ENCODE measurements at regions of chr14 and their contacts with region 1.

Region 1: DNA sequence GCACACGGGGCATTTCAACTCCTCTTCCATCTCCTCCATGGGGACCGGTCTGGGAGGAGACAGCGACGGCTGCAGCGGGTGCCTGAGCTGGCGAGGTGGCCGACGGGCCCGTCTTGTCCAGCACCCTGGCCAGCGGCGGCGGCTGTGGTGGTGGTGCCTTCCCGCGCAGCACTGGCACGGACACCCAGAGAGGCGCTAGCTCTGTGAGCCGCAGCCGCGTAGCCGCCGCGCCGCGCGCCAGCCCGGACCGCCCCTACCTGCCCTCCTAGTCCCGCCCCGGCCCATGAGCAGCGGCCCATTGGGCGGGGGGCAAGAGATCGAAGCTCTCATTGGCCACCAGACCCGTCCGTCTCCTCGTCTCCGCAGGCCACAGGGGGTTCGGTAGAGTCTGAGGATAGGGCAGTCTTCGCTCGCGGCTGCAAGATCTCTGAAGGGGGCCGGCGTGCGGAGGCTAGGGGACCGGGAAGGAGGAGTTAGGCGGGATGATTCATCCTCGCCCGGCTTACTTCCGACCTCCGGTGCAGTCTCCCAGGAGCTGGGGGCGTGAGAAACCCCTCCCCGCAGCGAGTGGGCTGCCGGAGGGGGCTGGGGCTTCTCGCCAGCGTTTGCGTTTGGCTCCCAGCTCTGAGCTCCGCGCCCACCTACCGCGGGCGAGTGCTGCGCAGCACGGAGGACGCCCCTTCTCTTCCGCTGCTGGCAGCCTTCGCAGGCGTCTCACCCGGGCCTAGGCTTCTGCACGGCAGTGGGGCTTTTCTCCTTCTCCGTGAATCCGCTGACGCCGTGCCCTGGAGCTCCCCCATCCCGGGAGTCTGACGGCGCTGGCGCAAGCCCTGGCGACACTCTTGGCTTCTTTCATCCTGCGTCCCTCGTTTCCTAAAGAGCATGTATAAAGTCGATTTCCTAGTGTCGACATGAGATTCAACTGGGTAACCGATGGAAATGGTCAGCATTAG is at the start of gene TRIM9:
- DNase-seq: peak; percentile 95 to 99 (median 96)
- H3K4me3 ChIP-seq: peak within 1 kb of the TSS; percentile 71
- H3K27ac ChIP-seq: peak within 1 kb of the TSS in 1 of 2 donors; percentile 55
- H3K4me1 ChIP-seq: peaks cover 7% of the 10 kb centered on the region
- H3K27me3 ChIP-seq: no peaks in the 10 kb centered on the region
- CTCF ChIP-seq: peak in 1 of 3 donors; percentile 10
- EP300 ChIP-seq: no peak
- POLR2A ChIP-seq: peak; percentile 26
- total RNA-seq, gene TRIM9: 0.36 to 8.7 (median 1.7) TPM

Region 2: GRCh38 chr14:50736932-50737419 is 358.2 kb before region 1 on chr14:
- intact Hi-C with region 1: no loop called
- DNase-seq: no peak
- H3K4me3 ChIP-seq: no peak overlapping the region
- H3K27ac ChIP-seq: no peak overlapping the region
- H3K4me1 ChIP-seq: peaks cover 7% of the 10 kb centered on the region
- H3K27me3 ChIP-seq: no peaks in the 10 kb centered on the region
- CTCF ChIP-seq: no peak
- EP300 ChIP-seq: no peak
- POLR2A ChIP-seq: no peak

Region 3: DNA sequence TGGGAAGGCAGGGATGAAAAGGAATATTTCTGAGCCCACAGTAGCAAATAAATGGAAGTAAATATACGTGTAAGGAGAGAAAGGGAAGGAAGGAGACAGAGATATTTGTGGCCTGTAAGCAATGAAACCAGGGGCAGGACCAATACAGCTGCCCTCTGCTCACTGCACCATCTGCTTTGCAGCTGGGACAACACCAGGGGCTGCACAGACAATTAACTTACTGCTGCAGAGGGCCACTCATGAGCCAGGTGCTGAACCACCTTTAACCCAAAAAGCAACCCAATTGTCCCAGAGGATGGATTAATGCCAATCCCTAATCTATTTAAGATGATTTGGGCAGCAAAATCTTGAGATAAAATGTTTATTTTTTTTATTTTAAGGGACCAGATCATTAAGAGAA is 114.3 kb after region 1 on chr14:
- intact Hi-C with region 1: loop called in 1 of 4 experiments (anchors 5 kb)
- DNase-seq: no peak
- H3K4me3 ChIP-seq: no peak overlapping the region
- H3K27ac ChIP-seq: no peak overlapping the region
- H3K4me1 ChIP-seq: no peaks in the 10 kb centered on the region
- H3K27me3 ChIP-seq: no peaks in the 10 kb centered on the region
- CTCF ChIP-seq: no peak
- EP300 ChIP-seq: no peak
- POLR2A ChIP-seq: no peak